SK-N-SH (cell line): ENCODE measurements at regions of chr16 and their contacts with region 1.

Region 1: DNA sequence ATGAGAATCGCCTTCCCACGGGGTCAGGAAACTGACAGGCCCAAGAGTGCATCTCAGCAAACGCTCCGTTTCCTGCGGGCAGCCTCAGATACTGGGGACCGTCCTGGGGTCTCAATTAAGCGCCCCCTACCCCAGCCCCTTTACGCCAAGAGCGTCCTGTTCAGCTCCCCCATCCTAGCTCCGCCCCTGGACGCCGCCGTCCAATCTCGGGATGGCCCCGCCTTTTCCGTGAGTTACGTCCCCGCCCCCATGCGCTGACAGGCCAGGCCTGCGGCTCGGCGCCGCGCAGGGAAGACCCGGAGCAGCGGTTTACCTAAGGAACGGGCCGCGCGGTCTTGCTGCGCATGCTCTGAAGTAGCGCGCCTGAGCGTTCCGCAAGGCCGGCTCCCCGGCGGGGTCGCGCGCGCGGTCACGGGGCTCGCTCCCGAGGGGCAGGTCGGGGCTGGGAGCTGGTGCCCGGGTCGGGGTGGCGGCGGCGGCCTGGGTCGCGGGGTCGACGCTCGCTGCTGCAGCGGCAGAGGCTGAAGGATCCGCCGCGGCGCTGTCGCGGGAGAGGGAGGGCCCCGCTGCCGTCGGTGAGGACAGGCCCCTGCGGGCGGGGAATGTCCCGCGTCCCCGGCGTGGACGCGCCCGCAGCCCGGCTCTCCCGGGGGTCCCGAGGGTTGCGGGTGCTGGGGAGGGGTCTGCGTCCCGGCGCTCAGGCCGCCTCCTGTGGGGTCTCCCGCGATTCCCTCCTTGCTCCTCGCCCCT is at the start of gene FLYWCH1:
- DNase-seq: peak; percentile 97
- H3K4me3 ChIP-seq: peak within 1 kb of the TSS; percentile 65 to 96
- H3K27ac ChIP-seq: peak within 1 kb of the TSS; percentile 53 to 65; a peak in 3 of 4 replicates
- H3K4me1 ChIP-seq: peaks cover 7 to 17% of the 10 kb centered on the region in 2 experiments; a peak in 3 of 4 replicates
- H3K27me3 ChIP-seq: no peaks in the 10 kb centered on the region
- CTCF ChIP-seq: no peak
- EP300 ChIP-seq: no peak
- RAD21 ChIP-seq: no peak
- polyA plus RNA-seq, gene FLYWCH1: 22.4 and 30.1 TPM in 2 replicates

Region 2: GRCh38 chr16:2692948-2693651 is 218.7 kb before region 1 on chr16:
- CTCF ChIA-PET with region 1: no interaction called
- POLR2A ChIA-PET with region 1: no interaction called
- DNase-seq: no peak
- H3K4me3 ChIP-seq: no peak overlapping the region
- H3K27ac ChIP-seq: no peak overlapping the region
- H3K4me1 ChIP-seq: no peaks in the 10 kb centered on the region
- H3K27me3 ChIP-seq: no peaks in the 10 kb centered on the region
- CTCF ChIP-seq: no peak
- EP300 ChIP-seq: no peak
- RAD21 ChIP-seq: no peak

Region 3: DNA sequence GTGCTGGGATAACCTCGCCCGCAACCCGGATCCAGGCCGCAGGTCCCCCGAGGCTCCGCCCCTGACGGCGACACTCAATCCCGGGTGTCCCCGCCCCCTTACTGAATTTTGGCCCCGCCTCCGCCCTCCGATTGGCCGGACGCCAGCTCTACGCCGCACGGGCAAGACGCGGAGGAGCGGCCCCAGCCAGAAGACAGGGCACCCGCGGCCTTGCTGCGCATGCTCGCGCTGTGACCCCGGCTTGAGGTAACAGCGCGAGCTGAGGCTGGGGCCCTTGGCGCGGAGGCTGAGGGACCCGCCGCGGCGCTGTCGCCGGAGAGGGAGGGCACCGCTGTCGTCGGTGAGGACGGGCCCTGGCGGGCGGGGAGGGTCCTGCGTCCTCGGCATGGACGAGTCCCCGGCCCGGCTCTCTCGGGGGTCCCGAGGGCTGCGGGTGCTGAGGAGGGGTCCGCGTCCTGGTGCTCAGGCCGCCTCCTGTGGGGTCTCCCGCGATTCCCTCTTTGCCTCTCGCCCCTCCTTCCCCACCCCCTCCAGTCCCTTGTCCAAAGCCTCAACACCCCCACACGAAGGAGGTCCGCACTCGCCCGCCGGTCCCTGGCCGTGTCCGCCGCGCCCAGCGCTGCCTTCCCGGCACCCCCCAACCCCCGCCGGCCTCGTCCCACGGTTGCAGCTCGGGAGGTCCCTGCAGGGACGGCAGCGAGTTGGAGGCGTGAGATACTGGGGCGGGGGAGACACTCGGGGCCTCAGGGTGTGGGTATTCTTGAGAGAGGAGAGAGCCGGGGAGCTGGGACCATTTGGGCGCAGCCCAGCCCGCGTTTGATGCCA is 28.5 kb before region 1 on chr16 and contains the start of gene FLYWCH2:
- CTCF ChIA-PET with region 1: interaction called, 4 read pairs
- POLR2A ChIA-PET with region 1: interaction called, 12 read pairs
- DNase-seq: peak; percentile 95
- H3K4me3 ChIP-seq: peak within 1 kb of the TSS; percentile 73 to 84
- H3K27ac ChIP-seq: peak within 1 kb of the TSS; percentile 93 to 94
- H3K4me1 ChIP-seq: peaks cover 0 to 6% of the 10 kb centered on the region in 2 experiments; a peak in 1 of 4 replicates
- H3K27me3 ChIP-seq: no peaks in the 10 kb centered on the region
- CTCF ChIP-seq: no peak
- EP300 ChIP-seq: no peak; a peak in 1 of 4 replicates
- RAD21 ChIP-seq: no peak
- polyA plus RNA-seq, gene FLYWCH2: 56.4 and 64.8 TPM in 2 replicates

Region 4: DNA sequence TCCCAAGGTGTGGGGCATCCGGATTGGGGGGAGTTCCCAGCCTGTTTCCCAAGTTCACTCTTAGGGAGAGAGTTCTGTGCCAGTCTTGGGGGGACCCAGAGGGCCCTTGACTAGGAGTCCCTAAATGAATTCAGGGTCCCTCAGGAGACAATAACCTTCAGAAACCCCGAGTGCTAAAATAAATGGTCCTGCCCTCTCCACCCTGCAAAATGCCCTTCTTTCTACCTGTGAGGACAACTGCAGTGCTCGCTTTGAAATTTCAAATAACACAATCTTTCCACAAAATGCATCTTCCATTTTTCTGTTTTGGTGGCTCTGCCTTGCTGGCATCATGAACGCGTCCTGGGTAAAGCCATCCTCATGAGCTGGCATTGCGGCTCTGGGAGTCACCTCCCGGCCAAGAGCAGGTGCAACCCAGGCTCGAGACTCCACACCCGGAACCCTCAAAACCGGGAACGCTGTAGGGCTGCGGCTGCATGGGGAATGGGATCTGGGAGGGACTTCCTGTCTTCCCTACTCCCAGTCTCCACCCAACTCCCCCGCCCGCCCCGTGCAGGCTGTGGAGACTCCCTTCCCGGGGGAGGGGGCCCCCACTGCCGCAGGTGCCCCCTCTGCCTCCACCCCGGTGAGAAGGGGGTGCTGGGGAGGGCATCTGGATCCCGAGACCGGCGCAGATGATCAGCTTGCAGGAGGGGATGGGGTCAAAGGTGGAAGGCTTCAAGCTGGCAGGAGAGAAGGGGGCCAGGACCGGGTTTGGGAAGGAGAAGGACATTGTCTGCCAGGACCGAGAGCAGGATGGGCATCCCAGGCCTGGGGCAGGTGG is 200.5 kb after region 1 on chr16 and contains the start of gene ZNF205:
- CTCF ChIA-PET with region 1: no interaction called
- POLR2A ChIA-PET with region 1: no interaction called
- DNase-seq: peak; percentile 92
- H3K4me3 ChIP-seq: peak within 1 kb of the TSS; percentile 78 to 96
- H3K27ac ChIP-seq: peak within 1 kb of the TSS in 1 of 2 experiments; percentile 61; a peak in 1 of 4 replicates
- H3K4me1 ChIP-seq: peaks cover 0 to 24% of the 10 kb centered on the region in 2 experiments; a peak in 1 of 4 replicates
- H3K27me3 ChIP-seq: no peaks in the 10 kb centered on the region
- CTCF ChIP-seq: no peak
- EP300 ChIP-seq: no peak
- RAD21 ChIP-seq: no peak
- polyA plus RNA-seq, gene ZNF205: 7.6 and 9.7 TPM in 2 replicates